Sciatic nerve (tissue), 2 donors: ENCODE measurements at regions of chr7 and their contacts with region 1.

Region 1: DNA sequence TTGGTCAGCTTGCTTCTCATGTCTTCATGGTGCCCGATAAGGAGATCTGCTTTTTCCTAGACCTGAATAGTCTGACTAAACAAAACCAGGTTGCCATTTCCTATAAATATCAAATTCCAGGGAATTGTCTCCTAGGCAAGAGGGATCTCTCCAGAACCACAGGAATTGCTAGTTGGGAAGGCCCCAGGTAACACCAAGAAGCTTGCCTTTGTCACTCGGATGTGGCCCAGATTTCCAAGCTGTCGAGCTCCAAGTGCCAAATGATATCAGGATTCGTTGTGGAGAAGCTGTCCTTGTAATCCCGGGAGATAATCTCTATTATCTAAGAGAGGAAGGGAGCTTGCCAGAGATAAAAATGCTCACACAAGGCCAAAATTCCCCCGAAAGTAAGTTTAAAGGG is 1288.5 kb upstream of the AUTS2 start:
- DNase-seq: no peak
- ATAC-seq: no peak

Region 2: GRCh38 chr7:66877577-66878300 is 1432.1 kb before region 1 on chr7:
- intact Hi-C with region 1: no loop called
- DNase-seq: no peak
- ATAC-seq: no peak

Region 3: GRCh38 chr7:68720697-68721096 is 410.9 kb after region 1 on chr7:
- intact Hi-C with region 1: no loop called
- DNase-seq: no peak
- ATAC-seq: no peak

Region 4: DNA sequence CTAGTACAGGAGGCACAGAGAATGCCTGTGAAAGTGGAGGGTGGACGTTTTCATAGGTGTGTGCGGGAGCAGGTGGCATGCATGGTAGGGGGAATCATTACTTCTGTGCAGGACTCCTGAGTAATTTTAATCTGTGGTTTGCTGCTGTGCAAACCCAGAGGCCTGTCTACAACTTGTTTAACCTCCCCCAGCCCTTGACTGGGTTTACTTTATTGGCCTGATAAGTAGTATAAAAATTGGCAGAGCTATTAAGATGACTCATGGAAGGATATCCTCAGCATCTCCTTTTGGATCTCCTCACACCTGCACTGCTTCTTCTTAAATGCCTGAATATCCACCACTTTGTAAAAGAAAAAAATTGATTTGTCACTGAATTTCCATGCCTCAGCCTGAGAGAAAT is 1393.3 kb after region 1 on chr7:
- intact Hi-C with region 1: no loop called
- DNase-seq: no peak
- ATAC-seq: no peak

Region 5: DNA sequence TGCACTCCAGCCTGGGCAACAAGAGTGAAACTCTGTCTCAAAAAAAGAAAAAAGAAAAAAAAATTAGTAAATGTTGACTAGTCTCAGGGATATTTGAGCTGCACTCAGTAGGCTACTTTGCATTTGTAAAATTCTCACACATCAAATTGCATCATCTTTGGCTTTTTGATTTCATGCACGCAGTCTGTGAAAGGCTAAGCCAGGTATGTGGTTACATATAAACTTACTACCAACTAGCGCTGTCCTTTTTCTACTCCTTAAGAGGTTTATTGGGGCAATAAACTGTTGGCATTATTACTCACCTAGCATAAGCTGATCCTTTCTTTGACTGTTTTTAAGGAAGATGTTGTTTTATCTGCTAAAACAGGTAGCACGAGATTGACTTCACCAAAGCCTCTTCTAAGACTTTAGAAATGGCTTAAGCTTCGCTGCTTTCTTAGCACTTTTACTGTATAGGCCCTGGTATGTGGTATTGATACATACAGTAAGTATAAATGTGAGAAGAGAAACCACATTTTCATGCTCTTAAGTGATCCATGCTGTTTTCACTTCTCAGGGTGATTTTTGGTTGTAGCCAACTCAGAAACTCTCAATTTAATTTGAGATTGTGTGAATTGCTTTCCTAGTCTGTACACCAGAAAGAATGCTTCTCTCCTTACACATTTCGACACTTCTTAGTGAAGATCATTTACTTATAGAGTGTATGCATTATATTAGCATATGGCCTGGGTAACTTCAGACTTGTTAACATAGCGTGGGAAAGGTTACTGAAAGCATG is 1612.4 kb after region 1 on chr7:
- intact Hi-C with region 1: loop called (anchors 10 kb)
- DNase-seq: no peak
- ATAC-seq: no peak